Gastrocnemius medialis (tissue), 4 donors: ENCODE measurements at regions of chr10 and their contacts with region 1.

Region 1: GRCh38 chr10:60883187-60883586 is 60.8 kb downstream of the RHOBTB1 start:
- DNase-seq: no peak
- ATAC-seq: no peak
- H3K4me3 ChIP-seq: no peak overlapping the region
- H3K27ac ChIP-seq: peak overlapping the region; percentile 59 to 96 (median 88)
- H3K4me1 ChIP-seq: peaks cover 37 to 56% of the 10 kb centered on the region in 2 donors
- H3K27me3 ChIP-seq: no peaks in the 10 kb centered on the region
- CTCF ChIP-seq: peak; percentile 36 to 60 (median 36)
- POLR2A ChIP-seq: no peak

Region 2: DNA sequence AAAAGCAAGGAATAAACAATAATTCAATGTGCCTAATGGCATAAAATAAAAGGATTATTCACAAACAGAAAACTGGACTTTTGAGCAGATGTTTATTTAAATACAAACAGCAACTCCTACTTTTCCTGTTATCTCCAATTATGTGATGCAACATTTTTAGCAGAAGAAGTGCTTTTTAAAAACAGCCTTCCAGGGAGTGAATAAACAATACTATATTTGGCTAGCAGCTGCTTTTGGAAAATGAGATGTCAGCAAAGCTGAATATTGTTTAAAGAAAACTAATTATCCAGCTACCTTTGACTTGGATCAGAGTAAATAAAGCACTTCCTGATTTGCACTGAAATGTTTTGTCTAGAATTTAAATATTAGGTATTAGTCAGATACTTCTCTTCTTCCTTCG is 81.7 kb before region 1 on chr10:
- in situ Hi-C with region 1: no loop called
- intact Hi-C with region 1: no loop called
- DNase-seq: no peak
- ATAC-seq: no peak
- H3K4me3 ChIP-seq: no peak overlapping the region
- H3K27ac ChIP-seq: no peak overlapping the region
- H3K4me1 ChIP-seq: no peaks in the 10 kb centered on the region
- H3K27me3 ChIP-seq: no peaks in the 10 kb centered on the region
- CTCF ChIP-seq: no peak
- POLR2A ChIP-seq: no peak

Region 3: GRCh38 chr10:60894786-60895185 is 11.6 kb after region 1 on chr10:
- in situ Hi-C with region 1: no loop called
- intact Hi-C with region 1: loop called (anchors 1 kb)
- DNase-seq: no peak
- ATAC-seq: no peak
- H3K4me3 ChIP-seq: no peak overlapping the region
- H3K27ac ChIP-seq: peak overlapping the region; percentile 81 to 96 (median 86)
- H3K4me1 ChIP-seq: peaks cover 57 to 61% of the 10 kb centered on the region in 2 donors
- H3K27me3 ChIP-seq: no peaks in the 10 kb centered on the region
- CTCF ChIP-seq: no peak
- POLR2A ChIP-seq: no peak

Region 4: DNA sequence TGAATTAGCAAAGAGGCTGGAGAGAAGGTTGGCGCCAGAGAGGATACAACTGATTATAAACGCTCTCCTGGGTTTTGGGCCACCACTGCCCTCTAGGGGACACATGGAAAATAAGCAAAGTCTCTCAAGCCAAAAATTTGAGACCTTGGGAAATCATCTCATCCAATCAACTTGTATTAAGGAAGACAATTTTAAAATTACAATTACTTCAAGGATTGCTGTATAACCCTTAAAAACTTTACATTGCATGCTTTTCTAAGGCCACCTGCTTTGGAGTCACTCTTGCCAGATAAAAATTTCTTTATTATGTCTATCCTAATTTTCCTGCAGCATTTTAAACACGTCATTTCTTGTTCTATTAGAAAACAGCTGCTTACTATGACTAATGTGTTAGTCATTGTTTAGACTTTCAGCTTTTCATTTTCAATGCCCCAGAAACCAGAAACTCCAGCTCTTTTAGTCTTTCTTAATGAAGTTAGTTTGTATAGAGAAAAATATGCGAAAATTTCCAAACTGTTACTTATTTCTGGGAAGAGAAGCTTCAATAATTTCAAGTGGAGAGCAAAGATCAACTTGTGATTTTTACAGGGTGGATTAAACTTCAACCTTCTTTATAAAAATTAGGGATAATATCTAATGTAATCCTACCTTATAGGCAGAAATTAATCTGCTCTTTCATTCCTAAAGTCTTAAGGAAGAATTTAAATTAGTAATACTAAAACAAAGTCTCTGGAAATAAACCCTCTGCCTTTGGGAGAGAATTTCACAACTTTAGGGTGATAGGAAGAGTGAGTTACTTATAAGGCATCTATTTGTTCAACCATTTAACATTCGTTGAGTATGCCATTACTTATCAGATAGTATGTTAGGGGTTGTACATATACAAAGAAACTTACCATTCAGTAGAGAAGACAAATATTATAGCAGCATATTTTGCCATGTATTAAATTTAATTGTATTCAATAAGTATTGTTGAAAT is 81.4 kb after region 1 on chr10:
- in situ Hi-C with region 1: no loop called
- intact Hi-C with region 1: loop called (anchors 2 kb)
- DNase-seq: peak; percentile 57 to 65
- ATAC-seq: peak; percentile 92
- H3K4me3 ChIP-seq: no peak overlapping the region
- H3K27ac ChIP-seq: peak overlapping the region in 3 of 4 donors; percentile 49 to 60 (median 53)
- H3K4me1 ChIP-seq: peaks cover 6 to 14% of the 10 kb centered on the region in 2 donors
- H3K27me3 ChIP-seq: no peaks in the 10 kb centered on the region
- CTCF ChIP-seq: peak; percentile 78 to 86 (median 80)
- POLR2A ChIP-seq: no peak